BJ (cell line): ENCODE measurements at regions of chr20 and their contacts with region 1.

Region 1: DNA sequence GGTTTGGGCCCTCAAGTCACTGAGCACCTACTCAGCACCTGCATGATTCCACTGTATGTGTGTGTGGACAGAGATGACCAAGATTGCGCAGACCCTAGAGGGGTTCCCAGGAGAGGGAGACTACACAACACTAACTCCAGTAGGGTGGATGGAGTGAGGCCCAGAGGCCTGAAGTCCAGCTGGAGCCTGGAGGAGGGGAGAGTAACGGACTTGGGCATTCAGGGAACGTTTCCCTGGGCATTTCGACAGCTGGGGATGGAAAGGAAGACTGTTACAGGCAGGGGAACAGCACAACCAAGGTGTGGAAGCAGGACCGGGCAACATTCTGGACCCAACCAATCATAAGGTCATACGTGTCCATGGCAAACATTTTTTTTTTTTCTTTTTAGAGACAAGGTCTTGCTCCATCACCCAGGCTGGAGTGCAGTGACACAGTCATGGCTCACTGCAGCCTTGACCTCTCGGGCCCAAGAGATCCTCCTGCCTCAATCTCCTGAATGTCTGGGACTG is 11.1 kb upstream of the CEBPB start:
- DNase-seq: no peak
- H3K4me3 ChIP-seq: no peak overlapping the region
- H3K27me3 ChIP-seq: no peaks in the 10 kb centered on the region
- CTCF ChIP-seq: no peak

Region 2: DNA sequence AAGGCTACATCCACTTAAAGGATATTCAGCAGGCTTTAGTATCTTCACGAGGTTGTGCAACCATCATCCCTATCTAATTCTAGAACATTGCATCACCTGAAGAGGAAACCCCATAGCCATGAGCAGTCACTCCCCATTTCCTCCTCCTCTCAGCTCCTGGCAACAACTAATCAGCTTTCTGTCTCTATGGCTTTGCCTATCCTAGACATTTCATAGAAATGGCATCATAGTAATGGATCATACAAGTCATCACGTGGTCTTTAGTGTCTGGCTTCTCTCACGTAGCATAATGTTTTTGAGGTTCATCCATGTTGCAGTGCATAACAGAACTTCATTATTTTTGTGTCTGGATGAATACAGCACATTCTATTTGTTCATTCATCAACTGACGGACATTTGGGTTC is 176.3 kb before region 1 on chr20:
- CTCF ChIA-PET with region 1: no interaction called
- POLR2A ChIA-PET with region 1: no interaction called
- DNase-seq: peak; percentile 30
- H3K4me3 ChIP-seq: no peak overlapping the region
- H3K27me3 ChIP-seq: no peaks in the 10 kb centered on the region
- CTCF ChIP-seq: no peak

Region 3: DNA sequence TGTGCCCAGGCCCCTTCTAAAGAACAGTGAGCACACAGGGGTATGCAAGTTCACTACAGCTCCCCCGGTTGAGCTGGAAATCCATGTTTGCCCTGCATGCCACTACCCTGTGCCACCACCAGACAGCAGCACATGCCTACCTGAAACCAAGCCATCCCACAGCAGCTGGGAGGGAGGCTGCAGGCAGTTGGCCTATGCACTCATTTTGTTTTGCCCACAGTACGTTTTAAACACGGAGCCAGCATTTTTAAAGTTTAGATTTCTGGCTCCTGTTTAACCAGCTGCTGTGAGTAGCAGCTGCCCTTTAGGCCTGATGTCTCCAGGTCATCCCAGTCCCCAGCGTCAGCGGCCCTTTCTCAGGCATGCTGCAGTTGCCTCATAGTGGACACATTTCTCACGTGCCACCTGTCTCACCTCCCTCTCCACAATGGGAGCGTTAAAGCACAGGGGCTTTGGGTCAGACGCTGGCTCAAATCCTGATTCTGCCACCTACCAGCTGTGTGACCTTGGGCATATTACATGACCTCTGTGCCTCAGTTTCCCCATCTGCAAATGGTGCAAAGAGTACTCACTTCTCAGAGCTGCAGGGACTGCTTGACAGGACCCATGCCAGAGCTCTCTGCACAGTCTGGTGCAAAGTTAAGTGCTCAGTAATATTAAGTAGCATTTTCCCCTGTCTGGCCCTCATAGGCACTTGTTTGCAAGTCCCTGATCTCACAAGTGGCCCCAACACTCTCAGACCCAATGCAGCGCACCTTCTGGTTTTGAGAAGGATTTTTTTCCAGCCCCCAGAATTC is 58.5 kb before region 1 on chr20:
- CTCF ChIA-PET with region 1: interaction called, 32 read pairs
- POLR2A ChIA-PET with region 1: no interaction called
- DNase-seq: no peak
- H3K4me3 ChIP-seq: no peak overlapping the region
- H3K27me3 ChIP-seq: no peaks in the 10 kb centered on the region
- CTCF ChIP-seq: peak; percentile 73

Region 4: DNA sequence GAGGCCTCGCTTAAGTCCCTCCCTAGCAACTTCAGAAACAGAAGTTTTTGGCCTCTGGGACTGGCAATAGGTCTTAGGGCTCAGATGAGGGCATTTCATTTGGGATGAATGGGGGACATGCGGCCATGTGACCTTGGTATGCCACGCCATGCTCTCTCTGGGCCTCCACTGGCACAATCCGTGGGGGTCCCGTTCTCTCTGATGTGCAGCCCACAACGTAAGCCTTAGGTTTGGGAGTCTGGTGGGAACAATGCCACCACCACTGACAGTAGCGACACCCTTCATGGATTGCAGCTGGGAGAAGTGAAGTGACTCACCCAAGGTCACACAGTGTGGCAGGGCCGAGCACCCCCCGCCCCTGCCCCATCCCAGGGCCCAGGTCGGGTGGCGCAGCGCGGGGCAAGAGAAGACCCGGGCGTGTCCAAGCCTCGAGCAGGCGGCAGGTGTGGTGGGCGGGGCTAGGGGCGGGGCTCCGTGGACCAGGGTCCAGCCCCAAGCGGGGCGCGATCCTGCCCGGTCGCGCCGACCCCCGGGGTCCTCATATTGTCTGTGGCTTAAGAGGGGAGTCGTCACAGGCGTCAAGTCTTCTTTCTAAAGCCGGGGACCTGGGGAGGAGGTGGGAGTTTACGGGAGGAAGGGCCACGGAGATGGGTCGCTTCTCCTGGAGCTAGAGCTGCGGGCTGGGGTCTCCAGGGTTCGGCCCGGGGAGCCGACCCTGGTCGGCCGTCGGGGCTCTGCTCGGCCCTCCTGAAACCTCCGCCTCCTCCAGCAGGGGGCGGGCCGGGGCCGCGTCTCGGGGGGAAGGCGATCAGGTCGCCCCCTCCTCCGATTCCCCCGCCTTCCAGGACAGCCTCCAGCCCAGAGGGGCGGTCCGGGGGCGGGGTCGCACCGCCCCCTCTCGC is 10.4 kb after region 1 on chr20:
- CTCF ChIA-PET with region 1: interaction called, 17 read pairs
- POLR2A ChIA-PET with region 1: no interaction called
- DNase-seq: no peak
- H3K4me3 ChIP-seq: peak overlapping the region; percentile 62
- H3K27me3 ChIP-seq: no peaks in the 10 kb centered on the region
- CTCF ChIP-seq: peak; percentile 82

Region 5: DNA sequence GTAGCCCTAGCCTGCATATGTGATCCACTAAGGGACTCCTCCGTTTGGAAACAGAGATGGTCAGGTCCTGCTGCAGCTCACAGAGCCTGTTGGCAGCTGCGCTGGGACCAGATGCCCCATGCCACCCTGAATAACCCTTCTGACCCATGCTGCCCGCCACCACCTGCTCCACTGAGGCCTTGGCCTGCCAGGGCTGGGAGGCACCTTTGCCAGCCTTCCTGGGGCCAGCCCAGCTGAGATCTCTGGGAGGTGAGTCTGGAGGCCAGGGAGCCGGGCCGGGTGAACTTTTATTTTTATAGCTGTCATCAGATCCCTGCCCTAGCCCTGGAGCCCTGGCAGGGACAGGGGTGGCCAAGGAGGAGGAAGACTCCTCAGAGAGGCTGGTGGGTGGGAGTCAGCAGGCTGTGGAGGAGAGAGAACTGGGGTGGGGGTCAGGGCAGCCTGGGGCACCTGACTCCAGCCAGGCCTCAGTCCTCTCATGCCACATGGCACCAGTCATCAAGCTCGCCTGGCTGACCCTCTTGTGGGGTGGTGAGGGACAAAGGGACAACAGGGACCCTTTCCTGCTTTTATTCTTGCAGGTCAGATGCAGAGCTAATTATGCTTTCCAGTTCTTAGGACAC is 21.0 kb after region 1 on chr20:
- CTCF ChIA-PET with region 1: no interaction called
- POLR2A ChIA-PET with region 1: no interaction called
- DNase-seq: no peak
- H3K4me3 ChIP-seq: no peak overlapping the region
- H3K27me3 ChIP-seq: no peaks in the 10 kb centered on the region
- CTCF ChIP-seq: no peak

Region 6: DNA sequence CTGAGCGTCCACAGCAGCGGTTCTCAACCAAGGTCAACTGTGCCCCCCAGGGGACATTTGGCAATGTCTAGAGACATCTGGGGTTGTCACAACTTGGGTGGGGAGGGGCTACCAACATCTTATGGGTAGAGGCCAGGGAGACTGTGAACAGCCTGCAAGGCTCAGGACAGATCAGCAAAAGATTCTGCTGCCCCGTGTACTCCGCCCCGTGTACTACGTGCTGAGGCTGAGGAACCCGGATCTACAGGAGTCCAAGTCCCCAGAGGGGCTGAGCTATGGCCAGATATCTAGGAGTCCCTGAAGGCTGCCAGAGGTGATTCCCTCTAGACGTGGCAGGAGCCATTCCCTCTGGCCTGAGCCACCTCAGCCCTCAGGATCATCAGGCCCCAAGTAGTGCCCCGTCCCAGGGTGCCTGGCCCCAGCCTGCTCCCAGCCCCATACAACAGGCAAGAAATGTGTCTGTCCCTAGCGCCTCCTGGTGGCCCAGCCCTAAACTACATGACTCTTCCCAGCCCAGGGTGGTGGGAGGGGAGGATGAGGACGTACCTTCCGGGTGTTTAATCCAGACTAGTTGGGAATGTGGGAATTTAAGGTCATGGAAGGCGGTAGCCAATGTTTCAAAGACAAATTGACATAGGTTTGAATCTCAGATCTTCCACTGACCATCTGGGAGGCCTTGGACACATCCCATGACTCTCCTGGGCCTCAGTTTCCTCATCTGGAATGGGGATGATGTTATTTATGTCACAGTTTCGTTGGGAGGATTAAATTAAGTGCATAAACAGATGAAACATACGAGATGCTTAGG is 281.1 kb after region 1 on chr20:
- CTCF ChIA-PET with region 1: interaction called, 195 read pairs
- POLR2A ChIA-PET with region 1: no interaction called
- DNase-seq: no peak
- H3K4me3 ChIP-seq: no peak overlapping the region
- H3K27me3 ChIP-seq: no peaks in the 10 kb centered on the region
- CTCF ChIP-seq: peak; percentile 95